A549 (cell line): ENCODE measurements at regions of chr20 and their contacts with region 1.

Region 1: GRCh38 chr20:8722276-8722928 is 346.5 kb upstream of the PLCB4 start:
- DNase-seq: peak; percentile 37 to 80
- ATAC-seq: peak; percentile 91 to 97
- H3K4me3 ChIP-seq: no peak overlapping the region
- H3K27ac ChIP-seq: no peak overlapping the region
- H3K4me1 ChIP-seq: no peaks in the 10 kb centered on the region
- CTCF ChIP-seq: peak; percentile 97
- EP300 ChIP-seq: no peak
- POLR2A ChIP-seq: no peak
- RAD21 ChIP-seq: peak; percentile 95 to 97

Region 2: GRCh38 chr20:6767536-6768227 is 1954.7 kb before region 1 on chr20 and contains the start of gene BMP2:
- CTCF ChIA-PET with region 1: interaction called, 21 read pairs
- POLR2A ChIA-PET with region 1: no interaction called
- DNase-seq: peak; percentile 29 to 48
- ATAC-seq: peak; percentile 88 to 89
- H3K4me3 ChIP-seq: peak within 1 kb of the TSS; percentile 67
- H3K27ac ChIP-seq: peak within 1 kb of the TSS; percentile 14 to 82; a peak in 5 of 6 replicates
- H3K4me1 ChIP-seq: 0 out of 3 replicates have a peak, but pooled peaks cover 6% of the 10 kb centered on the region
- CTCF ChIP-seq: peak; percentile 33; the same call in 2 of the 3 replicates
- EP300 ChIP-seq: no peak
- POLR2A ChIP-seq: no peak
- RAD21 ChIP-seq: no peak
- polyA plus RNA-seq, gene BMP2: 0.23 and 0.42 TPM in 2 replicates

Region 3: DNA sequence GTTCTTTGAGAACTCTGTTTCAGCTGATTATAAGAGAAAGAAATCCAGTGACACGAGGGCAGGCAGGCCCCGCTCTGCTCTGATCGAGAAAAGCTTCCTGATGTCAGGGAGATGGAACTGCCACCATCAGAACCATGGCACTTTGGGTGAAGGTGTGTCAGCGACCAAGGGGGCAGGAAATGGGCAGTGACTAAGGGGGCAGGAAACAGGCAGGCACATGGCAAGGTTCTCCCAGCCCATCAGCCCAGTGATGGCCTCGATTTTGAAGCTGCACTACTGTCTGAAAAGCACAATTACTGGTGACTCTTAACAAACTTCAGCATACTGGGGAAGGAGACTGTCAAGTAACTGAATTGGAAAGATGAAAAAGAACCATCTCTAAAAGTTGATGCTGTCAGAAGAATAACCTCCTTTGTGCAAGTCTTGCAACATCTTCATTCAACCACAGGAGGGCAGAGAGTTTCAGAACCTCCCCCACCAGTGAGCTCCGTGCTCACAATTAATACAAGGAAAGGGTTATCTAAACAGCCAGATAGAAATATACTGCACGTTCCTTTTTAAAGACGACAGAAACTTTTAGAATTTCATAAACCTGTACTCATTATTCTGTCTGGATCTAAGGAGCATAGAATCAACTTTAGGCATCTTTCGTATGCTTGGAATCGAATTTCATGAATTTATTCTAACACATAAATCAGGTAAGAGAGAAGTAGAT is 741.9 kb before region 1 on chr20:
- CTCF ChIA-PET with region 1: interaction called, 48 read pairs
- POLR2A ChIA-PET with region 1: no interaction called
- DNase-seq: peak; percentile 60 to 70
- ATAC-seq: peak; percentile 88 to 89
- H3K4me3 ChIP-seq: no peak overlapping the region
- H3K27ac ChIP-seq: no peak overlapping the region
- H3K4me1 ChIP-seq: peaks cover 15% of the 10 kb centered on the region; the same call in 2 of the 3 replicates
- CTCF ChIP-seq: peak; percentile 48; the same call in 2 of the 3 replicates
- EP300 ChIP-seq: no peak
- POLR2A ChIP-seq: no peak
- RAD21 ChIP-seq: peak; percentile 45 to 52

Region 4: GRCh38 chr20:8043687-8044282 is 678.6 kb before region 1 on chr20:
- CTCF ChIA-PET with region 1: interaction called, 128 read pairs
- POLR2A ChIA-PET with region 1: interaction called, 3 read pairs
- DNase-seq: peak; percentile 70 to 71
- ATAC-seq: peak; percentile 65 to 94; a peak in 3 of 6 replicates
- H3K4me3 ChIP-seq: no peak overlapping the region
- H3K27ac ChIP-seq: no peak overlapping the region
- H3K4me1 ChIP-seq: peaks cover 5% of the 10 kb centered on the region; the same call in 1 of the 3 replicates
- CTCF ChIP-seq: peak; percentile 91
- EP300 ChIP-seq: no peak
- POLR2A ChIP-seq: no peak
- RAD21 ChIP-seq: peak; percentile 75 to 76

Region 5: DNA sequence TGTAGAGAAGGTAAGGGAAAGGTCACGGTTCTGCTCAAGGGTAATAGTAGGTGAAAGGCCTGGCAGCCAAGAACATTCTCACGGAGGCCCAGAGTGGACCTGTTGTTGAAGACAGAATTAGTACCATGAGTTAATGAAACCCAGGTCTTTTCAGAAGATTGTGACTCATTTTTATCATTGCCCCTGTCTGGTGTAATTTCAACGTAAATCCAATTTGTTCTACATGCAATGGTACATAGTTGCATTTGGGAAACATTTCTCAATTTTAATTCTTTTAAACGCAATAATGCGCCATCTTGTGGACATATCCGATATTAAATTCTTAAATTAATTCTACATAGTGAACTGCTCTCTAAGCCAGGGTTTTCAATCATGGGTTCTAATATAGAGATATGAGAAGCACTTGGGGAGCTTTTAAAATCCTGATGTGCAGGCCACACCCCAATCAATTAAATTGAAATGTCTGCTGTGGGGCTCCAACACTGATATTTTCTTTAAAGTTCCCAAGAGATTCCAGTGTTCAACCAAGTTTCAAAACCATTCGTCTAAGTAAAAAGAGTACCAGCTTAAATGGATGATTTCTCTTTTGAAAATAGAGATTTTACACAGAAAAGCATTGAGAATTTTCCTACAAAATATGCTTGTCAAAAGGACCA is 332.9 kb before region 1 on chr20:
- CTCF ChIA-PET with region 1: interaction called, 24 read pairs
- POLR2A ChIA-PET with region 1: no interaction called
- DNase-seq: peak; percentile 9 to 51
- ATAC-seq: peak; percentile 50 to 65; a peak in 3 of 6 replicates
- H3K4me3 ChIP-seq: no peak overlapping the region
- H3K27ac ChIP-seq: no peak overlapping the region
- H3K4me1 ChIP-seq: no peaks in the 10 kb centered on the region
- CTCF ChIP-seq: peak; percentile 77
- EP300 ChIP-seq: no peak
- POLR2A ChIP-seq: no peak
- RAD21 ChIP-seq: peak; percentile 55 to 67

Region 6: GRCh38 chr20:8700756-8701155 is 21.6 kb before region 1 on chr20:
- CTCF ChIA-PET with region 1: interaction called, 33 read pairs
- POLR2A ChIA-PET with region 1: no interaction called
- DNase-seq: no peak
- ATAC-seq: 0 out of 6 replicates have a peak, but pooled peaks of 1 of the 2 experiments have one; percentile 19
- H3K4me3 ChIP-seq: no peak overlapping the region
- H3K27ac ChIP-seq: no peak overlapping the region
- H3K4me1 ChIP-seq: no peaks in the 10 kb centered on the region
- CTCF ChIP-seq: no peak
- EP300 ChIP-seq: no peak
- POLR2A ChIP-seq: no peak
- RAD21 ChIP-seq: no peak

Region 7: DNA sequence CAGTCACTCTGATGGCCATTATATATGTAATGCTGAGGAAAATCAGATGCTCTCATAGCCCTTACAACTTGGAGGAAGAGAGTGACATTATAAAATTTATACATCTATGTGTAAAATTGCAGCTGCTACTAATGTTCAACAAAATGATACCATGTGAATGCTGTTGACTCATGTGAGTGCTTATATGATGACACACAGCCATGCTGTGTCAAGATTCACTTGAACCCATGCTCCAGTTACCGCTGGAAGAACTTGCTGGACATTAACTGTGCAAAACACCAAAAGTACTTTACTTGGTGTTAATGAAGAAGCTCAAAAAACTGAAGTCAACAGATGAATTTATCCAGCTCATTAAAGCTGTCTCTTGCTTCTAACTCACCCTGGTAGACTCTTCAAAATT is 27.6 kb after region 1 on chr20:
- CTCF ChIA-PET with region 1: interaction called, 25 read pairs
- POLR2A ChIA-PET with region 1: no interaction called
- DNase-seq: no peak
- ATAC-seq: no peak
- H3K4me3 ChIP-seq: no peak overlapping the region
- H3K27ac ChIP-seq: no peak overlapping the region
- H3K4me1 ChIP-seq: no peaks in the 10 kb centered on the region
- CTCF ChIP-seq: no peak
- EP300 ChIP-seq: no peak
- POLR2A ChIP-seq: no peak
- RAD21 ChIP-seq: no peak